ENCODE measurements at regions of chr17 and their contacts with region 1.

Region 1: DNA sequence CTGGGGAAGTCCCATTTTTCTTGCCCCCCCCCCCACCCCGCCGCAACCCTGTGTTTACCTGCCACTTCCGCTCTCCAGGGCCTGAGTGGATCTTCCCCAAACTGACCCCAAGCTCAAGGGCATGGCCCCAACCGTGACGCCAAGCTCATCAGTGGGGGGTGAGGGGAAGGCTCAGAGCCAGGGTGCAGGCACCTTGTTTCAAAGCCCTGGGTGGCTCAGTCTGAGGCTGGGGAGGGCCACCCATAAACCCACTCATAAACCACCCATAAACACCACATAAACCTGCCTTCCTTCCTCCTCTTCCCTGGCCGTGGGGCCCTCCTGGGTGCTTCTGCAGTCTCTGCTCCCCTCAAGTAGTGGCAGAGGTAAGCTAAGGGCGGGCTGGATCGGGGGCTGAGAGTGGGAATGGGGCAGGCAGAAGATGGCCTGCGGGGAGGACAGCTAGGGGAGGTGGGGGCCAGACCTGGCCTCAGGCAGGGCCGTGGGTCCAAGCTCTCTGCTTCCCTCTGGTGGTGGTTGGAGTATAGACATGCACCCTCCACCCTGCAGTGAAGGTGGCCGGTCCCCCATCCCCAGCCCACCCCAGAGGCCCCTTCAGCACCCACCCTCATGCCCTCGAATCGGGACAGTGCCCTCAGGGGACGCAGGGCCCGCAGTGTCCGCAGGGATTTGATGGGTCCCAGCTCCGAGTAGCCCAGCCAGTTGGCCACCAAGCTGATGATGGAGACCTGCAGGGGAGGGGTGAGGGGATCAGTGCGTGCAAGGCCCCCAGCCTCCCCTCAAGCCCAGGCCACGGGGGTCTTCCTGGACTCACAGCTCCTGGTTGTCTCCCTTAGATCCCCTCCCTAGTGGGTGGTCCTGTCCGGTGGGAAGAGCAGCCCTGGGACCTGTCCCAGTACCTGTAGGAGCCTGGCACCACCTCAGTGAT is 14.6 kb upstream of the CD79B start:
- DNase-seq: peak; percentile 67
- H3K4me3 Mint-ChIP-seq: peak overlapping the region; percentile 37
- H3K27ac Mint-ChIP-seq: peak overlapping the region; percentile 71
- H3K4me1 Mint-ChIP-seq: peaks cover 22% of the 10 kb centered on the region
- H3K27me3 Mint-ChIP-seq: peaks cover 10% of the 10 kb centered on the region

Region 2: GRCh38 chr17:63911657-63912426 is 34.9 kb before region 1 on chr17:
- CTCF ChIA-PET with region 1: interaction called, 20 read pairs
- POLR2A ChIA-PET with region 1: interaction called, 3 read pairs
- DNase-seq: peak; percentile 69
- H3K4me3 Mint-ChIP-seq: no peak overlapping the region
- H3K27ac Mint-ChIP-seq: no peak overlapping the region
- H3K4me1 Mint-ChIP-seq: no peaks in the 10 kb centered on the region
- H3K27me3 Mint-ChIP-seq: peaks cover 26% of the 10 kb centered on the region

Region 3: GRCh38 chr17:63919311-63919723 is 27.4 kb before region 1 on chr17:
- CTCF ChIA-PET with region 1: interaction called, 59 read pairs
- POLR2A ChIA-PET with region 1: interaction called, 4 read pairs
- DNase-seq: peak; percentile 79
- H3K4me3 Mint-ChIP-seq: no peak overlapping the region
- H3K27ac Mint-ChIP-seq: no peak overlapping the region
- H3K4me1 Mint-ChIP-seq: peaks cover 8% of the 10 kb centered on the region
- H3K27me3 Mint-ChIP-seq: peaks cover 19% of the 10 kb centered on the region

Region 4: DNA sequence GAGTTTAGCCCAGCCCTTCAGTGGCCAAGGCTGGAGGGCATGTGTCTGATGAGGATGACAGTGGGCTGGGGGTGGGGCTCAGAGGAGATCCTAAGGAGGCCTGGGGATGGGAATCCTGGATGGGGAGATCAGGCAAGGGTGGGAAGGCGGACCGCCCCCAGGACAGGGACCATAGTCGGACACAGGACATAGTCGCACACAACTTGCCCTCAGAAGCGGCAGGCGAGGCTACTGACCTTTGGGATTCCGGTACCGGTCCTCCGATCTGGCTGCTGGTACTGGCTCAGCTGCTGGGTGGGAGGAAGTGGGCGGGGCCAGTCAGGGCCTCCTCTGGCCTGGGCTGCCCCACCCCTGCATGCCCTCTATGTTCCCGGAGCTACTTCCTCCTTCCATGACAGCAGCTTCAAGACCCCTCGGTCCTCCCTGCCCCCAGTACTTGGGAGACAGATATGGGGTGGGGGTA is 15.6 kb before region 1 on chr17:
- CTCF ChIA-PET with region 1: interaction called, 44 read pairs
- POLR2A ChIA-PET with region 1: interaction called, 10 read pairs
- DNase-seq: peak; percentile 79
- H3K4me3 Mint-ChIP-seq: peak overlapping the region; percentile 96
- H3K27ac Mint-ChIP-seq: peak overlapping the region; percentile 90
- H3K4me1 Mint-ChIP-seq: peaks cover 31% of the 10 kb centered on the region
- H3K27me3 Mint-ChIP-seq: peaks cover 4% of the 10 kb centered on the region

Region 5: DNA sequence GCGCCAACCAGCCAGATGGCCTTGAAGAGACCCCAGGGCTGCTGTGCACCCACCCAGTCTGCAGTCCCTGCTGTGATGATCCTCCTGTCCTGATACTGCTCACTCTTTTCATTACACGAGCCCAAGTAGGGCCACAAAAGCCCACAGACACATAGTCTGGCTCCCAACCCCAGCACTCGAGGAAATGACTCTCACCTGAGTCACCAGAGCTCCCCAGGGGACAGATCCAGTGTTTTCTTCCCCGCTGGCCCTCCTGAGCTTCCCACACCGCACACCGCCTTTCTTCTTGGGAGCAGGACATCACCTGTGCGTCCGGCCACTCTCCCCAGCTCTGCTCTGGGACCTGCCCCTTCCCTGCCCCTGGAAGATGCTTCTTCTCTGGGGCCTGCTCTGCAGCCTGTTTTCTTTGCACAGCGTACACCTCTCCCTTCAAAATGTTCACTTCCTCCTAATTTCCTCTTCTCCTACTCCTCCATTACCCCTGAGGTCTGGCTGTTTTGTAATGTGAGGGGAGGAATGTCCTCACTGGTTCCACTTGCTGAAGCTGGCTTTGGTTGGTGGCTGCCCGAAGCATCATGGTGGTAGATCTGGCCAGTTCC is 28.0 kb after region 1 on chr17:
- CTCF ChIA-PET with region 1: interaction called, 13 read pairs
- POLR2A ChIA-PET with region 1: no interaction called
- DNase-seq: no peak
- H3K4me3 Mint-ChIP-seq: no peak overlapping the region
- H3K27ac Mint-ChIP-seq: no peak overlapping the region
- H3K4me1 Mint-ChIP-seq: peaks cover 16% of the 10 kb centered on the region
- H3K27me3 Mint-ChIP-seq: peaks cover 14% of the 10 kb centered on the region

Region 6: GRCh38 chr17:63984651-63985386 is 38.1 kb after region 1 on chr17:
- CTCF ChIA-PET with region 1: interaction called, 21 read pairs
- POLR2A ChIA-PET with region 1: interaction called, 8 read pairs
- DNase-seq: peak; percentile 79
- H3K4me3 Mint-ChIP-seq: no peak overlapping the region
- H3K27ac Mint-ChIP-seq: peak overlapping the region; percentile 85
- H3K4me1 Mint-ChIP-seq: peaks cover 35% of the 10 kb centered on the region
- H3K27me3 Mint-ChIP-seq: no peaks in the 10 kb centered on the region

Region 7: GRCh38 chr17:63998050-63998720 is 51.5 kb after region 1 on chr17 and contains the start of gene PRR29:
- CTCF ChIA-PET with region 1: interaction called, 18 read pairs
- POLR2A ChIA-PET with region 1: interaction called, 8 read pairs
- DNase-seq: peak; percentile 82
- H3K4me3 Mint-ChIP-seq: peak within 1 kb of the TSS; percentile 92
- H3K27ac Mint-ChIP-seq: peak within 1 kb of the TSS; percentile 76
- H3K4me1 Mint-ChIP-seq: peaks cover 66% of the 10 kb centered on the region
- H3K27me3 Mint-ChIP-seq: peaks cover 8% of the 10 kb centered on the region
- total RNA-seq, gene PRR29: 12.0 to 15.1 TPM

Measured in activated CD4-positive, alpha-beta memory T cell treated with anti-CD3 and anti-CD28 coated beads, Interleukin-2, amount 10 ng/mL, durations not matched to agents 7 days and 5 days (primary cell).